HCT116 (cell line): ENCODE measurements at regions of chr5 and their contacts with region 1.

Region 1: DNA sequence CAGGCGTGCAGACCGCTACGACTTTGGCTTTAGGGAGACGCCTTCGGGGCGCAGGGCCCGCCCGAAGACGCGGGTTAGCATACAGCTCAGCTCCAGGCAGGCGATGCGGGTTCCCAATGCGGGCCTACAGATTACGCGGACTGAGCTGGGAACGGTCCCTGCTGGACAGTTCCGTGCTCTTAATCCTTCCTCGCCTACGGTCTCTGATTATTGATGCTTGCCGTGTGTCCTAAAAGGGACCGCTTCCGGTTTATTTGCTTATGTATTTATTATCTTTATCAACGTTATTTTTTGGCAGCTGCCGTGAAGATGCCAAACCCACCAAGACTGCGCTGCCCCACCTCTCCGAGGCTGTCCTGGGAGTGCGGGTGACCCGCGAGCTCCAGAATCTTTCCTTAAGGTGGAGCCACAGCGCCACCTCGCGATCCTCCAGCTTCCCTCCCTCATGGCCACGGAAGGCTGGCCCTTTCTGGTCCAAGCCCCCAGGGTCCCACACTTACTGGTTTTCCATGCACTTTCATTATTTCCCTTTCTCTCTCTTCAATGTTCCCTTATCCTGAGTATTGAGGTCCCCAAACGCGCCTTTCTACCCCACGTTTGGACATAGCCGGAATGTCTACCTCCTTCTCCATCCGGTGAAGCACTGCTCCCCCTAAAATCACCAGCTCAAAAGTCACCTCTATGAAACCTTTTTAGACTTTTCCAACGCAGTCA is 7.0 kb upstream of the EBF1 start:
- DNase-seq: peak; percentile 33
- ATAC-seq: peak; percentile 98
- H3K4me3 ChIP-seq: no peak overlapping the region
- H3K27ac ChIP-seq: no peak overlapping the region
- H3K4me1 ChIP-seq: no peaks in the 10 kb centered on the region
- H3K27me3 ChIP-seq: peaks cover 54% of the 10 kb centered on the region
- CTCF ChIP-seq: peak; percentile 72 to 94 (median 84)
- POLR2A ChIP-seq: no peak
- RAD21 ChIP-seq: peak; percentile 90

Region 2: DNA sequence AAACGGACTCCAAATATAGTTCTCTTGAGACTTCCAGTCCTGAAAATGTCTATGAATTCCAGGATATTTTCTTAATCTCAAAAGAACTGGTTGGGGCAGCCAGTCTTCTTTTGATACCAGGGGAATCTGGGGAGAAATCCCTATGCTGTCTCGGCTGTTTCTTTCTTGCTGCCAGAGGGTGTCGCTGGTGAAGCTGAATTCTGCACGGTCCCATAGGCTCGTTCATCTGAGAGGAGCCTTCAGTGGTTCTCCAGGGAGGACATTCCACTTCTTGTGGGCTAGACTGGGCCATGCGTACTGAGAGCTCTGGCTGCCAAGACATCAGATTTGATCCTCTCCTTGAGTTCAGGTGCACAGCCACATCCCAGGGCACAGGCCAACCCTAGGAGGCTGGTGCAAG is 1092.8 kb before region 1 on chr5:
- CTCF ChIA-PET with region 1: interaction called, 5 read pairs
- POLR2A ChIA-PET with region 1: no interaction called
- RAD21 ChIA-PET with region 1: no interaction called
- intact Hi-C with region 1: loop called (anchors 10 kb)
- DNase-seq: no peak
- ATAC-seq: peak; percentile 97
- H3K4me3 ChIP-seq: no peak overlapping the region
- H3K27ac ChIP-seq: no peak overlapping the region
- H3K4me1 ChIP-seq: no peaks in the 10 kb centered on the region
- H3K27me3 ChIP-seq: peaks cover 35% of the 10 kb centered on the region
- CTCF ChIP-seq: peak in 2 of 3 experiments; percentile 46 to 51; a peak in 4 of 6 replicates
- POLR2A ChIP-seq: no peak
- RAD21 ChIP-seq: peak; percentile 49

Region 3: DNA sequence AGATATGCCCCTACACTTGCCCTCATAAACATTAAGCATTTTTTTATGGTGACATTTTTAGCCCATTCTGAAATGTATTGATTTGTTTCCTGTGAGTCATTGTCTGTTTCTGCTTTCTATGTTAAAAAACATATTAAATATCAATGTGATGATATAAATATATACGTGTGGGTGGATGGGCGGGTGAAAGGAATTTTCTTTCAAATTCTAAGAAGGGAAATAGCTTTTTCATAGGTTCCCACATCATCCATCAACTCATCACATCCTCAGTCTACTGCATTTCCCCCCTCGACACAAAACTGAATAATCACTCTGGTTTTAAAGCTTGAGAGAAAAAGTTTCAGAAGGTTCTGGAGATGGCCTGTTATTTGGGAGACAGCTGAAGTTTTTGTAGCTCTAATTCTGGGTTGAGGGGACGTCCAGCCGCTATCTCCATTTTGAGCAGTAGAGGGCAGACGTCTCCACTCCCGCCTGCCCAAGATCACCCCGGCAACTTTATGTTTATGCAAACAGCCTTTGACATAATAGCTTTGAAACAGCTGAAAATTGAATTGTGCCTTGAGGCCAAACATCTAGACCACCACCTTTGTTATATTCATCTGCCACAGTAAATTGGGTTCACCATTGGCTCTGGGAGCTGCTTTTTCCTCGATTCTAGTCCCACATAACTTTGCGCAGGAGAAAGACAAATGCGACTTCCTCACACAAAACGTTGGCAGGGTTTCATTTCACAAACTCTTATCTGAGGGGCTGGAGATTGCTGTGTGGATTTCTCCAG is 1031.5 kb before region 1 on chr5:
- CTCF ChIA-PET with region 1: interaction called, 16 read pairs
- POLR2A ChIA-PET with region 1: no interaction called
- RAD21 ChIA-PET with region 1: interaction called in 1 of 2 experiments, 4 read pairs
- intact Hi-C with region 1: loop called (anchors 1 kb)
- DNase-seq: peak; percentile 42
- ATAC-seq: peak; percentile 93
- H3K4me3 ChIP-seq: no peak overlapping the region
- H3K27ac ChIP-seq: no peak overlapping the region
- H3K4me1 ChIP-seq: no peaks in the 10 kb centered on the region
- H3K27me3 ChIP-seq: peaks cover 15% of the 10 kb centered on the region
- CTCF ChIP-seq: peak; percentile 37 to 80 (median 78); a peak in 5 of 6 replicates
- POLR2A ChIP-seq: no peak
- RAD21 ChIP-seq: peak; percentile 65

Region 4: DNA sequence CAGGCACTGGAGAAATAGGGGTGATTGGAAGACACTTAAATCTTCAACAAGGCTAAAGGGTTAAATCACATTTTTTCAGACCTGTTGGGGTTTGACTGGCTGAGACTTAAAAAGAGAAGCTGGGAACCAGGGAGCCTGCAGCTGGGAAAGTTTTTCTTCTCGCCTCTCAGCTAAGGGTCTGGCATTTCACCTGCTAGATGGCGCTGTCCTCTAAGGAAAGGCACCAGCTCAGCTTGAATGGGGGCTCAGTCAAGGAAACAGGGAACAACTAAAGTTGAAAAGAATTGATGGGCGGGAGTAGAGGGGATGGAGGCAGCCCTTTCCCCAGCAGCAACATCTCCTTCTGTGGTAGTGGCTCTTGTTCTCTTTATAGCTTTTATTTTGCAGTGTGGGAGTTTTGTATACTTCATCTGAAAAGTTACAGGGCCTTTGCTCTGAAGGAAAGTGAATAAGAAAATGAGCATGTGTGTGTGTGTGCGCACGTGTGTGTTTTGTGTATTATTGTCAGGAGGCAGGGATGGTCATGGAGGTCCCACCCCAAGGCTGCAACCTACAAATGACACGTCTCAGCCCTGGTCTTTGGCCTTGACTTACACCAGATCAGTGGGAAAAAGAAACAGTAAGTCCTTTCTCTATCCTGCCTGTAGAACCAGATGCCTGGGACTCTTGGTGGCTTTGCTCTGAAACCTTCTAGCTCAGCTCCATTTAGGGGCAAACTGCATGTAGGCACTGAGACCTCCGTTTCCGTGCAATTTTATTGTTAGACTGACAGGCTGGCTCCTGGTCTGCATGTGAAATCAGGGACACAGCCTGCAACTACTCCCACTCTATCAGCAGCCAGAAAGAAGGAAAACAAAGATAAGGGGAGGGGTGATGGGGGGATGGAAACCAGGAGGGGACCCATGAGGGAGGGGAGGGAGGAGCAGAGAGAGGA is 931.5 kb before region 1 on chr5:
- CTCF ChIA-PET with region 1: interaction called, 27 read pairs
- POLR2A ChIA-PET with region 1: no interaction called
- RAD21 ChIA-PET with region 1: interaction called, 4 to 7 read pairs
- intact Hi-C with region 1: loop called (anchors 1 kb)
- DNase-seq: peak; percentile 24
- ATAC-seq: peak; percentile 93
- H3K4me3 ChIP-seq: no peak overlapping the region
- H3K27ac ChIP-seq: no peak overlapping the region
- H3K4me1 ChIP-seq: no peaks in the 10 kb centered on the region
- H3K27me3 ChIP-seq: peaks cover 53% of the 10 kb centered on the region; the same call in 1 of the 2 replicates
- CTCF ChIP-seq: peak; percentile 58 to 87 (median 77)
- POLR2A ChIP-seq: no peak
- RAD21 ChIP-seq: peak; percentile 88

Region 5: DNA sequence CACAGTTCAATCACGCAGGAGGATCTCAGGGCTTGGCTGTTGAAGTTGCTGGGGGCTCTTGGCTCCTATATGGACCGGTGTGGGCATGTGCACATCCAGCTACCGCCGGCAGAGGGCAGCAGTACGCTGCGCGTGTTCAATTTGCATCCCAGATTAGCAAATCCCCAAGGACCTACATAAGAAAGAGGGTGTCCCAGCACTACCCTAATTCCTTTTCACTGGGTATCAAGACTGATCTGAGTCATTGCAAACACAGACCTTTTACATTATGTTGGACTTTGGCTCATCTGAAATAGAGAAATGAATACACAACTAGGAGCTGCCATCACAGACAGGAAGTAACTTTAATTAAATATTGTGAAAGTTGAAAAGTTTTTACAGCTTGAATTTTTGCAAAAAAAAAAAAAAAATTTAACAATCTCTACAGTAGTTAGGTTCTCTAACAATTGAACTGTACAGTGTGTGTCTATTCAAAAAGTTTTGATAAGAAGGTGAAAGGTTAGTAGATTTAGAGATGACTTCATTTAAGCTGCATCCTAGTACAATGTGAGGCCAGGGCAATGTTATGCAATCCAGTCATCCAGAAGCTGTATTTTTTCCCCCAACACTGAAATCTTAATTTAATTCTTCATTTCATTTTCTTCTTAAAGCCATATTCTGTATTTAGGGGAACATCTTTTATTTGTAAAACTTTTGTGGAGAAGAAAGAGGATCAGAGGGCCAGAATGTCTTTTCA is 411.0 kb before region 1 on chr5:
- CTCF ChIA-PET with region 1: interaction called, 54 read pairs
- POLR2A ChIA-PET with region 1: no interaction called
- RAD21 ChIA-PET with region 1: interaction called, 8 to 12 read pairs
- intact Hi-C with region 1: loop called (anchors 1 kb)
- DNase-seq: peak; percentile 45
- ATAC-seq: peak; percentile 95
- H3K4me3 ChIP-seq: no peak overlapping the region
- H3K27ac ChIP-seq: no peak overlapping the region
- H3K4me1 ChIP-seq: no peaks in the 10 kb centered on the region
- H3K27me3 ChIP-seq: peaks cover 41% of the 10 kb centered on the region; the same call in 1 of the 2 replicates
- CTCF ChIP-seq: peak; percentile 62 to 97 (median 94)
- POLR2A ChIP-seq: no peak
- RAD21 ChIP-seq: peak; percentile 85

Region 6: GRCh38 chr5:158921441-158922262 is 185.1 kb before region 1 on chr5:
- CTCF ChIA-PET with region 1: no interaction called
- POLR2A ChIA-PET with region 1: no interaction called
- RAD21 ChIA-PET with region 1: no interaction called
- intact Hi-C with region 1: no loop called
- DNase-seq: no peak
- ATAC-seq: no peak
- H3K4me3 ChIP-seq: no peak overlapping the region
- H3K27ac ChIP-seq: no peak overlapping the region
- H3K4me1 ChIP-seq: no peaks in the 10 kb centered on the region
- H3K27me3 ChIP-seq: peaks cover 29% of the 10 kb centered on the region
- CTCF ChIP-seq: no peak
- POLR2A ChIP-seq: no peak
- RAD21 ChIP-seq: no peak